SK-N-SH (cell line): ENCODE measurements at regions of chr5 and their contacts with region 1.

Region 1: DNA sequence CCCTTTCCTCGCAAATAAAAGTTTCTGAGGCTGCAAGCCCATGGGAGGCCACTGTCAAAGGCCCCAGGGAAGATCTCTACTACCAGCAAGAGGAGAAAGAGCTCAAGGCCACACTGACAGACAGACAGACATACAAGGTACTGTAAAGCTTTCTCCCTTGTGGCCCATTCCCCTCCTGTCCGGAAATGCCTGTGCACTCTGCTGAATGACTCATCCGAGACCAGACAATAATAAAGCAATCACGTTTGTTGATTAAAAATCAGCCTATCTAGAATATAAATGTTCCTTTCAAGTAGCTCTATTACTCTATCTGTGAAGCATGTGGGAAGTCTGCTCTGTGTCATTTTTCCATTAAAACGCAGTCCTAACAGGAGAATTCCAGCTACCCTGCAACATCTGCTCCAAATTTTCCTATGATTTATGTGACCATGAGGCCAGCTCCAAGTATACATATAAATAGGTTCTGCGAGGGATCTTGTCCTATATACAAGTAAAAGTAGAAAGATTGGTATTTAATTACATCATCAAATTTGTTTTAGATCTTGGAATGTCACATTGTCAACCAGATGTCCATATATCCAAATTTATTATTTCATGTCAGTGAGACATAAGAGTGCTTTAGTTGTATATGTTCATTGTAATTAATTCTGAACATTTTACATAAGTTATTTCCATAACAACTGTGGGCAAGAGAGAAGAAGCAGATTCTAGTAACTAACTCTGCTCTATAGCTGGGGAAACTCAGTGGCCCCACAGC is 34.7 kb upstream of the TGFBI start:
- DNase-seq: peak; percentile 78
- H3K4me3 ChIP-seq: peak overlapping the region in 1 of 2 experiments; percentile 21; a peak in 2 of 4 replicates
- H3K27ac ChIP-seq: peak overlapping the region; percentile 97 to 98
- H3K4me1 ChIP-seq: peaks cover 29 to 42% of the 10 kb centered on the region in 2 experiments
- H3K27me3 ChIP-seq: no peaks in the 10 kb centered on the region
- CTCF ChIP-seq: no peak
- EP300 ChIP-seq: peak; percentile 97 to 99
- RAD21 ChIP-seq: 0 out of 2 replicates have a peak, but pooled peaks have one; percentile 36

Region 2: DNA sequence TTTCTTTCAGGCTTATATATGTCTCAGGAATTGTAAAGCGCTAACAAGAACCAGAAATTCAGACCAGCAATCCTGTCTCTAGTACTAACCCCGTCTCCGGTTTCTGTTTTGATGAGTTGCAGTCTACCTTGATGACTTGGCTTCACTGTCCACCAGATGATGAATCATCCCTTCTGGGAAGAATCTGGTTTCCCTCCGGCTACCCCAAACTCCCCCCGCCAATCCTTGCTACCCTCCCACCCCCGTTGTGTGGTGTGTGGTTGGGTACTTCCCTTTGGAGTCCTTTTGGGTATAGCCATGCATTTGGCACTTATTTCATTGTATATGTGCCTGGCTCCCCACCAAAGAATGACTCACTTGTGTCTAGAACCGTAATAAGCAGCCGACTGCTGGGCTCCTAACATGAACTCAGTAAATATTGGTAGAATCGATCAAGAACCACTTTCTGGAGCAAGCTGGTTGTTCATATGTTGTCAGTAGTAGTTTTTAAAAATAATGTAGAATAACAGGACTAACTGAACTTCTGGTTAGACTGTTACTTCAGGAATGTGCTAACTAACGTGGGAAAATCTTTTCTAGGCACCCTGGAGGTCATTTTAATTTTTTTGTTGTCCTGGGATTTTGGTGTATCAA is 26.4 kb after region 1 on chr5:
- CTCF ChIA-PET with region 1: interaction called, 13 read pairs
- POLR2A ChIA-PET with region 1: no interaction called
- DNase-seq: peak; percentile 41
- H3K4me3 ChIP-seq: no peak overlapping the region
- H3K27ac ChIP-seq: peak overlapping the region; percentile 98 to 100
- H3K4me1 ChIP-seq: peaks cover 31 to 44% of the 10 kb centered on the region in 2 experiments
- H3K27me3 ChIP-seq: no peaks in the 10 kb centered on the region
- CTCF ChIP-seq: no peak
- EP300 ChIP-seq: peak; percentile 95 to 100
- RAD21 ChIP-seq: no peak

Region 3: GRCh38 chr5:136132557-136133221 is 138.6 kb after region 1 on chr5 and contains the start of gene SMAD5:
- CTCF ChIA-PET with region 1: no interaction called
- POLR2A ChIA-PET with region 1: no interaction called
- DNase-seq: peak; percentile 99
- H3K4me3 ChIP-seq: peak within 1 kb of the TSS; percentile 87 to 95
- H3K27ac ChIP-seq: peak within 1 kb of the TSS; percentile 82 to 96
- H3K4me1 ChIP-seq: peaks cover 0 to 16% of the 10 kb centered on the region in 2 experiments; a peak in 2 of 4 replicates
- H3K27me3 ChIP-seq: no peaks in the 10 kb centered on the region
- CTCF ChIP-seq: no peak
- EP300 ChIP-seq: 0 out of 4 replicates have a peak, but pooled peaks have one; percentile 31 to 41
- RAD21 ChIP-seq: no peak
- polyA plus RNA-seq, gene SMAD5: 26.9 and 36.1 TPM in 2 replicates